H1 (cell line): ENCODE measurements at regions of chr10 and their contacts with region 1.

Region 1: GRCh38 chr10:24571870-24572450 is 151.7 kb downstream of the ARHGAP21 start:
- DNase-seq: no peak
- H3K4me3 ChIP-seq: no peak overlapping the region
- H3K27ac ChIP-seq: no peak overlapping the region
- H3K4me1 ChIP-seq: peaks cover 0 to 2% (median 0%) of the 10 kb centered on the region in 4 experiments; a peak in 1 of 7 replicates
- H3K27me3 ChIP-seq: no peaks in the 10 kb centered on the region
- CTCF ChIP-seq: no peak
- EP300 ChIP-seq: no peak
- POLR2A ChIP-seq: no peak
- RAD21 ChIP-seq: no peak

Region 2: DNA sequence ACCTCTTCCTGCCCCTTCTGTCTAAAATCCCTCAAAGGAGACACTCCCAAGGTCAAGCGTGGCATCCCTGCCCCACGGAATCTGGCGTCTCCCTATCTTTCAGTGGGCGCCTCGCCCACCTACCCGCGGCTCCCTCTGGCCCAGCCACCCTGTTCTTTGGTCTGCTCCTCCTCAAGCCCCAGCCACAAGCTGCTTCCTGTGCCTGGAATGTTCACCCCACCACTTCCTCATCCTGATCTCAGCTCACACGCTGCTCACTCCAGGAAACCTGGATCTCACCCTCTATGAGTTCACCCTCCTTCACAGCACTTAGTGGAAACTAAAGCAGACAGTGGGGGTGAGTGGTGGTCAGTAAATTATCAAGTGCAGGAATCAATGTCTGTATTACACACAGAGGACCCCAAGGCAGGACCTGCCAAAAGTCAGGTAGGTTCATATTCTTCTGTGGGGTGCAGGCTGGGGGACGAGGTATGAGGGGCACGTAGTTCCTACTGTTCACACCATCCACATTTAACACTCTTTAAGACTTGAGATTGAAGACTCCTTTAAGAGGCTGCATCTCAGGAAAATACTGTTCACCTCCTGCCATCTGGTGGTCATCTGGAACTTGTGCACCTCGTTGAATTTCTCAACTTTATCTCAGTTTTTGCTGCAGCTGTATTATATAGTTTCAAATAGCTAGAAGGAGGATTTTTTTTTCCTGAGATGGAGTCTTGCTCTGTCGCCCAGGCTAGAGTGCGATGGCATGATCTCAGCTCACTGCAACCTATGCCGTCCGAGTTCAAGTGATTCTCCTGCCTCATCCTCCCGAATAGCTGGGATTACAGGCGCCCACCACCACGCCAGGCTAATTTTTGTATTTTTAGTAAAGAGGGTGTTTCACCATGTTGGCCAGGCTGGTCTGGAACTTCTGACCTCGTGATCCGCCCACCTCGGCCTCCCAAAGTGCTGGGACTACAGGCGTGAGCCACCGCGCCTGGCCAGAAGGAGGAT is 14.9 kb before region 1 on chr10:
- CTCF ChIA-PET with region 1: interaction called, 12 read pairs
- POLR2A ChIA-PET with region 1: no interaction called
- DNase-seq: no peak
- H3K4me3 ChIP-seq: no peak overlapping the region
- H3K27ac ChIP-seq: no peak overlapping the region
- H3K4me1 ChIP-seq: peaks cover 0 to 3% (median under 1%) of the 10 kb centered on the region in 4 experiments; a peak in 5 of 7 replicates
- H3K27me3 ChIP-seq: no peaks in the 10 kb centered on the region
- CTCF ChIP-seq: peak in 2 of 3 experiments; percentile 65 to 73; a peak in 3 of 4 replicates
- EP300 ChIP-seq: no peak
- POLR2A ChIP-seq: no peak
- RAD21 ChIP-seq: peak; percentile 86 to 89

Region 3: GRCh38 chr10:24603333-24603732 is 31.4 kb after region 1 on chr10:
- CTCF ChIA-PET with region 1: no interaction called
- POLR2A ChIA-PET with region 1: no interaction called
- DNase-seq: no peak
- H3K4me3 ChIP-seq: no peak overlapping the region
- H3K27ac ChIP-seq: no peak overlapping the region
- H3K4me1 ChIP-seq: no peaks in the 10 kb centered on the region
- H3K27me3 ChIP-seq: no peaks in the 10 kb centered on the region
- CTCF ChIP-seq: no peak
- EP300 ChIP-seq: no peak
- POLR2A ChIP-seq: no peak
- RAD21 ChIP-seq: no peak